IMR-90 (cell line): ENCODE measurements at regions of chr3 and their contacts with region 1.

Region 1: GRCh38 chr3:71681224-71681668 is 44.0 kb downstream of the EIF4E3 start:
- DNase-seq: peak; percentile 83
- ATAC-seq: peak; percentile 79
- H3K4me3 ChIP-seq: no peak overlapping the region
- H3K27ac ChIP-seq: peak overlapping the region; percentile 51; the same call in 1 of the 2 replicates
- H3K4me1 ChIP-seq: peaks cover 12% of the 10 kb centered on the region
- H3K27me3 ChIP-seq: no peaks in the 10 kb centered on the region
- CTCF ChIP-seq: peak; percentile 91
- POLR2A ChIP-seq: no peak
- RAD21 ChIP-seq: peak; percentile 82

Region 2: GRCh38 chr3:71103430-71103921 is 577.8 kb before region 1 on chr3:
- CTCF ChIA-PET with region 1: no interaction called
- POLR2A ChIA-PET with region 1: no interaction called
- dilution Hi-C with region 1: no loop called
- in situ Hi-C with region 1: no loop called
- intact Hi-C with region 1: loop called (anchors 10 kb)
- DNase-seq: peak; percentile 62
- ATAC-seq: no peak
- H3K4me3 ChIP-seq: no peak overlapping the region
- H3K27ac ChIP-seq: peak overlapping the region; percentile 75
- H3K4me1 ChIP-seq: peaks cover 34% of the 10 kb centered on the region
- H3K27me3 ChIP-seq: no peaks in the 10 kb centered on the region
- CTCF ChIP-seq: no peak
- POLR2A ChIP-seq: no peak
- RAD21 ChIP-seq: no peak

Region 3: DNA sequence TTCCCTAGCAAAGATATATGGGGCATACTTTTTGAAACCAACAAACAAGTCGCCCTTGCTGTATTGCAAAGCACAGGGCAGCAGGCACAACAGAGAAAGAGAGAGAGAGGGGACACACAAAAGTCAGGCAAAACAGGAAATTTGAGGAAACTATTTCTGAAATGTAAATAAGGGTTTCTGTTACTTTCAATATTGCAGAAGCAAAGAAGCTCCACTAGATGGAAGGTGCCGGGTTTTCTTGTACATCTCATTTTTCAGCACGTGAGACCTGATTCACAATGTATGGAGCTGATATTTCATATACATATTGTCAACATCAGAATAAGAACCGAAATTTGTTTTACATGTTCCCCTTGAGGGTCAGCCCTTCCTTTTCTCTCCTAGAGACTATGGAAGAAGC is 225.1 kb before region 1 on chr3:
- CTCF ChIA-PET with region 1: no interaction called
- POLR2A ChIA-PET with region 1: no interaction called
- dilution Hi-C with region 1: no loop called
- in situ Hi-C with region 1: no loop called
- intact Hi-C with region 1: loop called (anchors 2 kb)
- DNase-seq: peak; percentile 31
- ATAC-seq: peak; percentile 79
- H3K4me3 ChIP-seq: peak overlapping the region; percentile 6; the same call in 1 of the 2 replicates
- H3K27ac ChIP-seq: peak overlapping the region; percentile 60; the same call in 1 of the 2 replicates
- H3K4me1 ChIP-seq: peaks cover 3% of the 10 kb centered on the region
- H3K27me3 ChIP-seq: no peaks in the 10 kb centered on the region
- CTCF ChIP-seq: no peak; the same call in 1 of the 2 replicates
- POLR2A ChIP-seq: no peak
- RAD21 ChIP-seq: peak; percentile 31

Region 4: GRCh38 chr3:71537211-71537611 is 144.0 kb before region 1 on chr3:
- CTCF ChIA-PET with region 1: no interaction called
- POLR2A ChIA-PET with region 1: no interaction called
- dilution Hi-C with region 1: no loop called
- in situ Hi-C with region 1: no loop called
- intact Hi-C with region 1: loop called (anchors 5 kb)
- DNase-seq: peak; percentile 96
- ATAC-seq: peak; percentile 76
- H3K4me3 ChIP-seq: no peak overlapping the region
- H3K27ac ChIP-seq: peak overlapping the region; percentile 60; the same call in 1 of the 2 replicates
- H3K4me1 ChIP-seq: peaks cover 18% of the 10 kb centered on the region
- H3K27me3 ChIP-seq: no peaks in the 10 kb centered on the region
- CTCF ChIP-seq: no peak
- POLR2A ChIP-seq: no peak
- RAD21 ChIP-seq: no peak; the same call in 1 of the 2 replicates

Region 5: DNA sequence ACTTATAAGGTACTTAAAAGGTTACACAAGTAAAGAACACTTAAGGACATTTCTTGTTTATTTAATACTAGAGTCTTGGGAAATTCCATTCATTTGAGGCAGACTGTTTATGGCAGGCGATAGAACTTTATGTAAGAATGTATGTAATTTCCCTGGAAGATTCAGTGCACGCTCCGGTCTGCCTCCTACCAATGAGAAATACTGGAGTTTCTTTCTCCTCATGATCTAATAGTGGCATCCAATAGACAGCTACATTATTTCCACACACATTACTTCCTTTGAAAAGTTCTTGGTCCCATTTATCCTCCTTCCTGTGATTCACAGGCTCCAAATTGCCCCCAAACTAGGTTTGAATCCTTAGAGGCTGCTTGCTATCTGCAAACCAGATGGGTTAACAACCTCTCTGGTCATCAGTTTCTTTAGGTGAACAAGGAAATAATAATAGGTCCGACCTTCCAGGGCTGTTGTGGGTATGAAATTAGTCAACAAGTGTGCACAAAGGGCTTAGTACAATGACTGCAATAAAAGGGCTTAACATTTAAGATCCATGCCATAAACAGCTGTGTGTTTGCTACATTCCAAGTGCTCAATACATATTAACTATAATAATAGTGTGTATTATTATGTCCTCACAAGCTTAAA is 13.2 kb after region 1 on chr3:
- CTCF ChIA-PET with region 1: interaction called, 10 read pairs
- POLR2A ChIA-PET with region 1: no interaction called
- dilution Hi-C with region 1: no loop called
- in situ Hi-C with region 1: no loop called
- intact Hi-C with region 1: no loop called
- DNase-seq: peak; percentile 96
- ATAC-seq: peak; percentile 89
- H3K4me3 ChIP-seq: no peak overlapping the region
- H3K27ac ChIP-seq: peak overlapping the region; percentile 93; the same call in 1 of the 2 replicates
- H3K4me1 ChIP-seq: peaks cover 13% of the 10 kb centered on the region
- H3K27me3 ChIP-seq: no peaks in the 10 kb centered on the region
- CTCF ChIP-seq: no peak
- POLR2A ChIP-seq: no peak
- RAD21 ChIP-seq: no peak